K562 (cell line): ENCODE measurements at regions of chr12 and their contacts with region 1.

Region 1: DNA sequence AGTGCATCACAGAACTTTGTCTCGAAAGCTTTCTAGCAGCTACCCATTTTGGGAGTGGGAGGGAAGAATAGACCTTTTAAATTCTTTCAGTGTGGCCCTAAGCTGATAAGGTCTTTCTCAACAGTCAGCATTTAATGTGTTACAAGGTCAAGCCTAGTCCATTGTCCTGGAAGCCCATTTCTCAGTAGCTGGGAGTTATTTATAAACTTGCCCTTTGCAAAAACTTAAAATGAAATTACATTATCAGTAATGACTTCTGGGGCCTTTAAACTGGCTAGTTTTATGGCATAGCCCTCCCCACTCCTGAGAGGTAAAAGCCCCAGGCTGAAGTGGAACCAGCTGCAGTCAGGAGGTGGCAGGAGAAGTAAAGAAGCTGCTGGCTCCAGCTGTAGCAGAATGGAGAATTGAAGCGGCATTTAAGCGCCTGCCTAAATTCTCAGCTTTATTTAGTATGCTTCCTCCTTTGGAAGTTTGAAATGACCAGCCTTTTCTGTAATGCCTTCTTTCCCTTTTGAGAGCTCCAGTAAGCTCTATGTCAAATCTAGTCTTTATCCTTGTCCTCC is 12.4 kb downstream of the COPZ1 start:
- DNase-seq: peak; percentile 34 to 88 (median 60)
- ATAC-seq: peak; percentile 86
- H3K4me3 ChIP-seq: 0 out of 2 replicates have a peak overlapping the region, but pooled peaks have one; percentile 2
- H3K27ac ChIP-seq: peak overlapping the region; percentile 74
- H3K4me1 ChIP-seq: peaks cover 34 to 39% of the 10 kb centered on the region in 2 experiments
- H3K27me3 ChIP-seq: no peaks in the 10 kb centered on the region
- CTCF ChIP-seq: peak; percentile 42 to 71 (median 67); a peak in 4 of 6 replicates
- EP300 ChIP-seq: peak; percentile 88; the same call in 1 of the 2 replicates
- POLR2A ChIP-seq: peak; percentile 41
- RAD21 ChIP-seq: peak; percentile 67 to 78

Region 2: DNA sequence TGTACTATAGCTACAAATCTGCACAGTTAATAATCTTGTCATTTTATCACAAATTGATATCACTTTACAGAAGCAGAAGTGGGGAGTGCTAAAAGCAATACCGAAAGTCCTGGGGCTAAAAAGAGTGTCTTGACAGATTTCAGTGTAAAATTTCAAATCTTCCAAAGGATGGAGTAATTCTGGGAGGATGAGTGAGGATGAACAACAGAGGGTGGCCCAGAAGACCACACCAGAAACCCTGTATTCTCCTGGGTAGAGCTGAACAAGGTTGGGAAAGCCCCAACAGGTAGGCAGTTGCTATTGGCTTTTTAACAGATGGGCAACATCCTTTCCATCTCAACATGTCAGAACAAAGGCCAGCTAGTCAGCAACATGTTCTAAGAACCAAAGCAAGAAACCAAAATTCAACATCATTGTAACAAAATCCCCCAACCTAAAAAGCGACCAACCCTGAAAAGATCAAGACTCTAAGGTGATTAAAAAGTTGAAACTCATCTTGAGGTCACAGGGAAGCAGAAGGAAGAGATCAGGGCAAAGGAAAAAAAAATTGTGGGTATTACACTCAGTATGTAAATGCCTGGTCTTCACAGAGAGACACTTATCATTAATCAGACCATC is 96.3 kb before region 1 on chr12:
- CTCF ChIA-PET with region 1: no interaction called
- POLR2A ChIA-PET with region 1: no interaction called
- in situ Hi-C with region 1: no loop called
- intact Hi-C with region 1: no loop called
- DNase-seq: no peak
- ATAC-seq: peak; percentile 34; the same call in 2 of the 3 replicates
- H3K4me3 ChIP-seq: no peak overlapping the region
- H3K27ac ChIP-seq: no peak overlapping the region
- H3K4me1 ChIP-seq: peaks cover 4 to 10% of the 10 kb centered on the region in 2 experiments; a peak in 3 of 5 replicates
- H3K27me3 ChIP-seq: no peaks in the 10 kb centered on the region
- CTCF ChIP-seq: no peak
- EP300 ChIP-seq: no peak
- POLR2A ChIP-seq: no peak
- RAD21 ChIP-seq: no peak

Region 3: GRCh38 chr12:54279866-54280467 is 57.4 kb before region 1 on chr12 and contains the start of gene CBX5:
- CTCF ChIA-PET with region 1: no interaction called
- POLR2A ChIA-PET with region 1: interaction called, 67 read pairs
- in situ Hi-C with region 1: no loop called
- intact Hi-C with region 1: no loop called
- DNase-seq: peak; percentile 97 to 99 (median 98)
- ATAC-seq: peak; percentile 50
- H3K4me3 ChIP-seq: peak within 1 kb of the TSS; percentile 71
- H3K27ac ChIP-seq: peak within 1 kb of the TSS; percentile 99
- H3K4me1 ChIP-seq: peaks cover 8 to 14% of the 10 kb centered on the region in 2 experiments; a peak in 3 of 5 replicates
- H3K27me3 ChIP-seq: no peaks in the 10 kb centered on the region
- CTCF ChIP-seq: no peak
- EP300 ChIP-seq: no peak
- POLR2A ChIP-seq: peak; percentile 86
- RAD21 ChIP-seq: no peak; a peak in 1 of 4 replicates
- polyA plus RNA-seq, gene CBX5: 49.8 to 53.2 TPM

Region 4: GRCh38 chr12:54294152-54294952 is 43.0 kb before region 1 on chr12:
- CTCF ChIA-PET with region 1: interaction called, 12 read pairs
- POLR2A ChIA-PET with region 1: interaction called, 103 read pairs
- in situ Hi-C with region 1: no loop called
- intact Hi-C with region 1: no loop called
- DNase-seq: peak; percentile 80 to 93 (median 83)
- ATAC-seq: peak; percentile 34
- H3K4me3 ChIP-seq: peak overlapping the region; percentile 53
- H3K27ac ChIP-seq: peak overlapping the region; percentile 84
- H3K4me1 ChIP-seq: peaks cover 34 to 38% of the 10 kb centered on the region in 2 experiments; a peak in 4 of 5 replicates
- H3K27me3 ChIP-seq: no peaks in the 10 kb centered on the region; a peak in 1 of 5 replicates
- CTCF ChIP-seq: peak; percentile 92 to 96 (median 93)
- EP300 ChIP-seq: peak; percentile 80
- POLR2A ChIP-seq: no peak
- RAD21 ChIP-seq: peak; percentile 92 to 94

Region 5: GRCh38 chr12:54352022-54352531 is 14.7 kb after region 1 on chr12:
- CTCF ChIA-PET with region 1: interaction called, 3 read pairs
- POLR2A ChIA-PET with region 1: interaction called, 43 read pairs
- in situ Hi-C with region 1: no loop called
- intact Hi-C with region 1: no loop called
- DNase-seq: peak; percentile 40 to 90 (median 62)
- ATAC-seq: peak; percentile 80
- H3K4me3 ChIP-seq: no peak overlapping the region
- H3K27ac ChIP-seq: peak overlapping the region; percentile 58
- H3K4me1 ChIP-seq: peaks cover 38 to 50% of the 10 kb centered on the region in 2 experiments
- H3K27me3 ChIP-seq: no peaks in the 10 kb centered on the region
- CTCF ChIP-seq: no peak
- EP300 ChIP-seq: peak; percentile 62; the same call in 1 of the 2 replicates
- POLR2A ChIP-seq: peak; percentile 58
- RAD21 ChIP-seq: no peak; a peak in 1 of 4 replicates

Region 6: GRCh38 chr12:54368709-54369583 is 31.6 kb after region 1 on chr12:
- CTCF ChIA-PET with region 1: interaction called, 11 read pairs
- POLR2A ChIA-PET with region 1: interaction called, 14 read pairs
- in situ Hi-C with region 1: no loop called
- intact Hi-C with region 1: no loop called
- DNase-seq: peak; percentile 76 to 96 (median 83)
- ATAC-seq: peak; percentile 85
- H3K4me3 ChIP-seq: peak overlapping the region; percentile 22; the same call in 1 of the 2 replicates
- H3K27ac ChIP-seq: peak overlapping the region; percentile 87
- H3K4me1 ChIP-seq: peaks cover 38 to 42% of the 10 kb centered on the region in 2 experiments
- H3K27me3 ChIP-seq: no peaks in the 10 kb centered on the region
- CTCF ChIP-seq: peak; percentile 96 to 97 (median 96)
- EP300 ChIP-seq: no peak
- POLR2A ChIP-seq: peak; percentile 53
- RAD21 ChIP-seq: peak; percentile 84 to 92